ENCODE measurements at regions of chr12 and their contacts with region 1.

Region 1: GRCh38 chr12:116703214-116703795 is 34.6 kb downstream of the SPRING1 start:
- DNase-seq: peak; percentile 72 to 80
- H3K4me3 ChIP-seq: no peak overlapping the region
- H3K4me3 Mint-ChIP-seq: no peak overlapping the region
- H3K27ac Mint-ChIP-seq: no peak overlapping the region
- H3K4me1 ChIP-seq: peaks cover 3% of the 10 kb centered on the region
- H3K4me1 Mint-ChIP-seq: peaks cover 13% of the 10 kb centered on the region
- H3K27me3 ChIP-seq: no peaks in the 10 kb centered on the region
- H3K27me3 Mint-ChIP-seq: no peaks in the 10 kb centered on the region
- CTCF ChIP-seq: peak; percentile 83 to 95

Region 2: DNA sequence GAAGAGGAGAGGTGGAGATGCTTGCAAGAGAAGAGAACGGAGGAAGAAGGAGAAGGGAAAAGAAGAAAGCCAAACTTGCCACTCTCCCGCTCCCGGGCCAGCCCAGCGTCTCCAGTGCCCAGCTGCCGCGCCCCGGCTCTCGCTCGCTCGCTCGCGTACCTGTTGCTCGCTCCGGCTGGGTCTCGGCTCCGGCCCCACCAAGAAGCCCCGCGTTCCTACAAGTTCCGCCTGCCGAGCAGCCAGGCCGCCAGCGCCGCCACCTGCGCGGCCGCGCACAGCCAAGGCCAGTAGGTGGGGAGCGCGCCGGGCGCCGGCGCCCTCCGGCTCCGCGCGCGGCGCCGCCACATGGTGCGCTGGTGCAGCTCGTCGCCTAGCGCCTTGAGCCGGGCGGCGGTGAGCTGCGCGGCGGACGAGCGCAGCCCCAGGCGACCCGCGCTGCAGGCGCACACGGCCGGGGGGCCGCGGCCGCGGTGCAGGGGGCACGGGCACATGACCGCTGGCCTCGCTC is 177.6 kb after region 1 on chr12:
- CTCF ChIA-PET with region 1: interaction called, 4 read pairs
- POLR2A ChIA-PET with region 1: no interaction called
- intact Hi-C with region 1: loop called (anchors 10 kb)
- DNase-seq: peak; percentile 54 to 76
- H3K4me3 ChIP-seq: peak overlapping the region; percentile 37
- H3K4me3 Mint-ChIP-seq: peak overlapping the region; percentile 85
- H3K27ac Mint-ChIP-seq: peak overlapping the region; percentile 34
- H3K4me1 ChIP-seq: peaks cover 12% of the 10 kb centered on the region; the same call in 1 of the 2 replicates
- H3K4me1 Mint-ChIP-seq: peaks cover 21% of the 10 kb centered on the region
- H3K27me3 ChIP-seq: peaks cover 11% of the 10 kb centered on the region
- H3K27me3 Mint-ChIP-seq: peaks cover 32% of the 10 kb centered on the region
- CTCF ChIP-seq: peak in 1 of 2 experiments; percentile 2

Region 3: GRCh38 chr12:116916714-116917114 is 213.4 kb after region 1 on chr12:
- CTCF ChIA-PET with region 1: interaction called, 3 read pairs
- POLR2A ChIA-PET with region 1: no interaction called
- intact Hi-C with region 1: loop called (anchors 1 kb)
- DNase-seq: peak; percentile 74 to 80
- H3K4me3 ChIP-seq: no peak overlapping the region
- H3K4me3 Mint-ChIP-seq: no peak overlapping the region
- H3K27ac Mint-ChIP-seq: peak overlapping the region; percentile 83
- H3K4me1 ChIP-seq: peaks cover 52% of the 10 kb centered on the region
- H3K4me1 Mint-ChIP-seq: peaks cover 42% of the 10 kb centered on the region
- H3K27me3 ChIP-seq: no peaks in the 10 kb centered on the region
- H3K27me3 Mint-ChIP-seq: no peaks in the 10 kb centered on the region
- CTCF ChIP-seq: peak in 1 of 2 experiments; percentile 49

Region 4: GRCh38 chr12:116955382-116956021 is 252.2 kb after region 1 on chr12:
- CTCF ChIA-PET with region 1: interaction called, 12 read pairs
- POLR2A ChIA-PET with region 1: no interaction called
- intact Hi-C with region 1: loop called (anchors 1 kb)
- DNase-seq: peak; percentile 63 to 74
- H3K4me3 ChIP-seq: no peak overlapping the region
- H3K4me3 Mint-ChIP-seq: no peak overlapping the region
- H3K27ac Mint-ChIP-seq: no peak overlapping the region
- H3K4me1 ChIP-seq: no peaks in the 10 kb centered on the region
- H3K4me1 Mint-ChIP-seq: peaks cover 11% of the 10 kb centered on the region
- H3K27me3 ChIP-seq: no peaks in the 10 kb centered on the region
- H3K27me3 Mint-ChIP-seq: no peaks in the 10 kb centered on the region
- CTCF ChIP-seq: peak; percentile 30 to 64

Region 5: DNA sequence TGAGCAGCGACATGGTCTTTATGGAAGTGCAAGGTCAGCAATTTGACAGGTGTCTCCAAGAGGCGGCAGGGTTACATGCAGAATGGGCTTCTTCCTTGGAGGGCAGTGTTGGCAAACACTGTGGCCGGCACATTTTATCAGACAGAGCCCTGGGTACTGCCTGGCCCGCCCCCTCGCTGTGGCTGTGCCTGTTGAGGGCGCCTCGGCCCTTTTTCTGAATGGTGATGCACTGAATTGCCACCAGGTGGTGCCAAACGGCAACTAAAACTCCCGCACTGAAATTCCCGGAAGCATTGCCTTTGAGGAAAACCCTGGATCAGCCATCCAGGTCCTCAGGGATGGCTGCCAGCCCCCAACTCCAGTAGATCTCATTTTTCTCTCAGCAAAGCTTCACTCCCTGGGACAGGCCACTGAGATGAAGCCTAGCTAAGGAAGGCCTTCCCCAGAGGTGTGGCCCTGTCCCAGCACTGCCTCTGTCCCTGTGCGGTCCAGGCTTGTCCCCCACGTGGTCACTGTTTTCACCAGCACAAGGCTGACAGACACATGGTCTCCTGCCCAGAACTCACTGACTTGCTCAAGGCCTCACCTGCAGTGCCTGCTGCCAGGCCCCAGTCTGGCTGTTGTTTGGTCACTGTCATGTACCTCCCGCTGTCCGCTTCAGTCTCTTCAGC is 322.3 kb after region 1 on chr12:
- CTCF ChIA-PET with region 1: no interaction called
- POLR2A ChIA-PET with region 1: no interaction called
- intact Hi-C with region 1: loop called (anchors 10 kb)
- DNase-seq: peak; percentile 70 to 80
- H3K4me3 ChIP-seq: no peak overlapping the region
- H3K4me3 Mint-ChIP-seq: no peak overlapping the region
- H3K27ac Mint-ChIP-seq: peak overlapping the region; percentile 66
- H3K4me1 ChIP-seq: peaks cover 6% of the 10 kb centered on the region; the same call in 1 of the 2 replicates
- H3K4me1 Mint-ChIP-seq: no peaks in the 10 kb centered on the region
- H3K27me3 ChIP-seq: no peaks in the 10 kb centered on the region
- H3K27me3 Mint-ChIP-seq: no peaks in the 10 kb centered on the region
- CTCF ChIP-seq: peak; percentile 80 to 87

Region 6: DNA sequence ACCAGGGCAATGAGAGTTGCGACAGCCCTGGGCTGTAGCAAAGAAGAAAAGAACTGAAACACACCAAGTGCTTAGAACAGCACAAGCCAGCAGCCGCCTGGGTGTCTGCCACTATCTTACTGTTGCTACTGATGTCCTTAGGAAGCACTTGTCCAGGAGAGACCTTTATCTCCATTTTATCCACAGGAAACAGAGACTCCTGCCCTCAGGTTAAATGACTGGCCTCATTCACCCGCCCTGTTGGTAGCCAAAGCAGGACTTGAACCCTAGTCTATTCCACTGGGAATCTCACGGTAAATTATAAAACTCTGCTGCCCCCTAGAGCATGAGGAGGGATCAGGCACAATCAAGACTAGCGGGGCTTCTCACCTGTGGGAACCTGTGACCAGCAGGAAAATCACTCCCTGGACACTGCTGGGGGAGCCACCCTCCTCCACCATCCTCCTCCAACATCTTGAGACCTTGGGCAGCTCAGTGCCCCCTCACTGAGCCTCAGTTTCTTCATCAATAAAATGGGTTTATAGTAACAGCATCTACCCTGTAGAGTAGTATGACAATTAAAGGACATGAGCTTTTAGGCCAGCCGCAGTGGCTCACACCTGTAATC is 416.4 kb after region 1 on chr12:
- CTCF ChIA-PET with region 1: no interaction called
- POLR2A ChIA-PET with region 1: no interaction called
- intact Hi-C with region 1: loop called (anchors 5 kb)
- DNase-seq: peak; percentile 40 to 56
- H3K4me3 ChIP-seq: no peak overlapping the region
- H3K4me3 Mint-ChIP-seq: no peak overlapping the region
- H3K27ac Mint-ChIP-seq: peak overlapping the region; percentile 75
- H3K4me1 ChIP-seq: peaks cover 20% of the 10 kb centered on the region
- H3K4me1 Mint-ChIP-seq: peaks cover 10% of the 10 kb centered on the region
- H3K27me3 ChIP-seq: no peaks in the 10 kb centered on the region
- H3K27me3 Mint-ChIP-seq: no peaks in the 10 kb centered on the region
- CTCF ChIP-seq: peak; percentile 56 to 61